SK-N-SH (cell line): ENCODE measurements at regions of chr5 and their contacts with region 1.

Region 1: GRCh38 chr5:21919410-21920022 is 933.6 kb downstream of the CDH12 start:
- DNase-seq: peak; percentile 30
- H3K4me3 ChIP-seq: no peak overlapping the region; a peak in 1 of 4 replicates
- H3K27ac ChIP-seq: no peak overlapping the region
- H3K4me1 ChIP-seq: no peaks in the 10 kb centered on the region
- H3K27me3 ChIP-seq: no peaks in the 10 kb centered on the region
- CTCF ChIP-seq: peak; percentile 80
- EP300 ChIP-seq: no peak
- RAD21 ChIP-seq: peak; percentile 69

Region 2: DNA sequence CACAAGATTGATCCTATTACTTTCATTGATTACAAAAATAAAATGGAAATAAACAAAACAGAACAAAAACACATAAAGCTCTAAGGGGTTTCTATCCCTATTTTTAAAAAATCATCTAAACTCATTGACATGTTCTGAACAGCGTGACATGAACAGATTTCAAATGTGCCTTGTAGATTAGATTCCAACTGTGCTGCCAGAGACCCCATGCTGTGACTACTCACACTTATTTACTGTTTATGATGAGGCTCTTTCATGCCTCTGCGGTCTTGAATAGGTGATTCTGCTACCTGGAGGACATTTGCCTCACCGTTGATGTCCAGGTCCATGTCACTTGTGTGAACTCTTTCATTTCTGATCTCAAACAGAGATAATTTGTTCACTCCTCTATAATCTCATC is 56.5 kb before region 1 on chr5:
- CTCF ChIA-PET with region 1: no interaction called
- POLR2A ChIA-PET with region 1: no interaction called
- DNase-seq: no peak
- H3K4me3 ChIP-seq: no peak overlapping the region
- H3K27ac ChIP-seq: no peak overlapping the region
- H3K4me1 ChIP-seq: no peaks in the 10 kb centered on the region
- H3K27me3 ChIP-seq: no peaks in the 10 kb centered on the region
- CTCF ChIP-seq: no peak
- EP300 ChIP-seq: no peak
- RAD21 ChIP-seq: no peak

Region 3: DNA sequence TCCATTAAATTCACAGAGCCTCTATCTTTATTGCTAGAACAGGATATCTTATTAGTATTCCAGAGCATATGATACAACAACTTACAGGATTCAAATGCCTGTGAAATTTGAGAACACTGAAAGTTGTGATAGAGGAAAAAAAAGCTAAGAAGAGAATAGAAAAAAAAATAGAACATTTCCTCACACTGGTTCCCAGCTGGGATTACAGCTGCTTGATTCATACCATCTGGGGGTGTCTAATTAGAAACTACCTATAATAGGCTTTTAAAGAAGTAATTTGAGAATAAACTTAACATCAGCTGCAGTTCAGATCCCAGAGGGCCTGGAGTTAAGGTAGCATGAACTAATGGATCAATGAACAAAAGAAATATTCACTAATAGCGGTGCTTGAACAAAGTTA is 11.6 kb after region 1 on chr5:
- CTCF ChIA-PET with region 1: interaction called, 10 read pairs
- POLR2A ChIA-PET with region 1: no interaction called
- DNase-seq: no peak
- H3K4me3 ChIP-seq: no peak overlapping the region
- H3K27ac ChIP-seq: no peak overlapping the region
- H3K4me1 ChIP-seq: no peaks in the 10 kb centered on the region; a peak in 1 of 4 replicates
- H3K27me3 ChIP-seq: no peaks in the 10 kb centered on the region; the same call in 1 of the 2 replicates
- CTCF ChIP-seq: no peak
- EP300 ChIP-seq: no peak
- RAD21 ChIP-seq: no peak

Region 4: DNA sequence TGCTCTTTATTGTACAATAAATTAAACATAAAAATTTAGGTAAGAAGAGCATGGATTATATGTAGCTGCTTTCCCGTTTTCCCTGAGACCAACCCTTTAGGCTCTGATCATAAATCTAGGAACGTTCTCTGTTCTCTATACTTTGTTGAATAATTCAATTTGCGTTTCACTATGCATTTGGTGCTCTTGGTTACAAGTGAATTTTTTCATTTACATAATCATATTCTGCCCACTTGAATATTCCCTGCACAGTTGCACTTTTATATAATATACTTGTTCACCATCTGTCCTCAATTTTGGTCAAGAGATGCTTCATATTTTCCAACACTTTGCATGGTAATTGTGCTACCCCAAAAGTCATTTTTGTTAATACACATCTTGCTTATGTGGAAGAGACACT is 191.8 kb after region 1 on chr5:
- CTCF ChIA-PET with region 1: no interaction called
- POLR2A ChIA-PET with region 1: no interaction called
- DNase-seq: no peak
- H3K4me3 ChIP-seq: no peak overlapping the region
- H3K27ac ChIP-seq: no peak overlapping the region
- H3K4me1 ChIP-seq: no peaks in the 10 kb centered on the region
- H3K27me3 ChIP-seq: no peaks in the 10 kb centered on the region
- CTCF ChIP-seq: no peak
- EP300 ChIP-seq: no peak
- RAD21 ChIP-seq: no peak

Region 5: GRCh38 chr5:22372376-22372775 is 452.9 kb after region 1 on chr5:
- CTCF ChIA-PET with region 1: no interaction called
- POLR2A ChIA-PET with region 1: no interaction called
- DNase-seq: no peak
- H3K4me3 ChIP-seq: no peak overlapping the region
- H3K27ac ChIP-seq: no peak overlapping the region
- H3K4me1 ChIP-seq: no peaks in the 10 kb centered on the region
- H3K27me3 ChIP-seq: no peaks in the 10 kb centered on the region
- CTCF ChIP-seq: no peak
- EP300 ChIP-seq: no peak
- RAD21 ChIP-seq: no peak